ENCODE measurements at regions of chr2 and their contacts with region 1.

Region 1: DNA sequence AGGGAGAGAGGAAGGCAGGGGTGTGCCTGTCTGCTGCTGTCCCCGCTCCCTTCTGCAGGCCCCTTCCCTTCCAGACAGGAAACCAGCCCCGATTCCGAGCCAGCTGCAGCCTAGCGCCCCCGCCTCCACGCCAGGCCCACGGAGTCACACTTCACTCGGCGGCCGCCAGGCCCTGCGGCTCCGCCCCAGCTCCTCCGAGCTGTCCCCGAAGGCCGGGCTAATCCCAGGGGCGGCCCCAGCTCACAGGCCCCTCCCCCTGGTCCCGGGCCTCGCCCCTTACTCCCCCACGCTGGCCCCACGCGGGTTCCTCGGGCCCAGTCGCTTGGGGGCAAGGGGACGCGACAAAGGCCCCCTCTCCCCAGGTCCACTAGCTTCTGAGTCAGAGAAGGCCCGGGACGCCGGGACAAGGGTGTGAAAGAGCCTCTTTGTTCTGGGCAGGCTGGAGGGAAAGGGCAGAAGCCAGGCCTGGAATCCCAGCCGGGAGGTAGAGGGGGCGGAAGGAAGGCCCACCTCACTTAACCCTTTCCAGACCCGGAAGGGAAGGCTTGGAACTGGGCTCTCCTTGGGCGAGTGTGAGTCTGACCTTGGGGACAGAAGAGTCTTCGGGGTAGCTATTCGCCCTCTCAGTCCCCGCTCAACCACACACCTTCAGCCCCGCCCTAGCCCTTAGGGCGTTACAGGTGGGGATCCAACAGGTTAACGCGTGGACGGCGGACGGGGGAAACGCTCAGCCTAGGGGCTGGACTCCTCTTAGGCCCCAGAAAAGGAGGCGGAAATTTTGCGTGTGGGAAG is 1.2 kb downstream of the RTKN start:
- DNase-seq: peak; percentile 94

Region 2: DNA sequence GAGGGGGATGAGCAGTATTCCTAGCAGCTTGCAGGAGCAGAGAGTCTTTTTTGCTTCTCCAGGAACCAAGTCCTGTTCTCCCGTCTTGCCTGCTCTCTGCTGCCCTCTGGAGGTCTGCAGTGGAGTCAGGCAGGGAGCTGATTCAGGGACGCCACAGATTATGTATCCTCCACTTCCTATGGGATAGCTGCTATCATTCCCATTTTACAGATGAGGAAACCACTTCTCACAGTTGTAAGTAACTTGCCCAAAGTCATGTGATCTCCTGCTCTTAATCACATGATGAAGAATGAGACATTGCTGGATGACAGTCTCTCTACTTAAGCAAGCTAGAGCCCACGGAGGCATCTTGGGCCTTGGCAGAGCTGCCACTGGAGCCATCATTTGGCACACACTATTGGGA is 105.6 kb before region 1 on chr2:
- CTCF ChIA-PET with region 1: no interaction called
- POLR2A ChIA-PET with region 1: no interaction called
- DNase-seq: peak; percentile 89

Region 3: DNA sequence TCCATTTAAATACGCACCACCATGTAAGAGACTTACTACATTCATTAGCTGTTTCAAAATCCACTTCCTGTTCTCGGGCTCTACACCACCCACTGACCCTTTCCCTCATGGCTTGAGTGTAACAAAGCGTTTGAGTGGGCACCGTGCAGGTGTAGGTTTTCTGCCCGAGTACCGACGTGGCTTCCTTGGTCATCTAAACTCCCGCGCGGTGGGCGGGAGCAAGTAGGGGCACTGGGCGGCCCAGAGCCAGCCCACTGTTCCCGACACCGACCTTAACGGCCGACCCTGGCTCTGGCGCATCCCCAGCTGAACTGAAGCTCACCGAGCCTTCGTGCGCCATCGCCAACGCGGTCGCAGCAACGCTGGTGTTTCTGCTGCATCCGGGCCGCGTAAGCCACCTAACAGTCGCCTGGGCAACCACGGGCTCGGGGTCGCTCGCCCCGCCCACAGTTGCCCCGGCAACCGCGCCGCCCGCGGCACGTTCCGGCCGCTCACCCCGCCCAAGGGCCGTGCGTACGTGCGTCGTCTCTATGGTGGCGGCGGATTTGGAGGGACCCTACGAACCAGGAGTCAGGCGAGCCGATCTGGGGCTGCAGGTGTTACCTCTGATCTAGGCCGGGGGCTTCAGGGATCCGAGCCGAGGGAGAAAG is 19.2 kb before region 1 on chr2 and contains the starts of genes C2orf81 and WDR54:
- CTCF ChIA-PET with region 1: no interaction called
- POLR2A ChIA-PET with region 1: interaction called, 20 read pairs
- DNase-seq: peak; percentile 97

Region 4: GRCh38 chr2:74429487-74430451 is 10.8 kb before region 1 on chr2:
- CTCF ChIA-PET with region 1: no interaction called
- POLR2A ChIA-PET with region 1: interaction called, 18 read pairs
- DNase-seq: no peak

Measured in HEK293T (cell line).